ENCODE measurements at regions of chr19 and their contacts with region 1.

Region 1: DNA sequence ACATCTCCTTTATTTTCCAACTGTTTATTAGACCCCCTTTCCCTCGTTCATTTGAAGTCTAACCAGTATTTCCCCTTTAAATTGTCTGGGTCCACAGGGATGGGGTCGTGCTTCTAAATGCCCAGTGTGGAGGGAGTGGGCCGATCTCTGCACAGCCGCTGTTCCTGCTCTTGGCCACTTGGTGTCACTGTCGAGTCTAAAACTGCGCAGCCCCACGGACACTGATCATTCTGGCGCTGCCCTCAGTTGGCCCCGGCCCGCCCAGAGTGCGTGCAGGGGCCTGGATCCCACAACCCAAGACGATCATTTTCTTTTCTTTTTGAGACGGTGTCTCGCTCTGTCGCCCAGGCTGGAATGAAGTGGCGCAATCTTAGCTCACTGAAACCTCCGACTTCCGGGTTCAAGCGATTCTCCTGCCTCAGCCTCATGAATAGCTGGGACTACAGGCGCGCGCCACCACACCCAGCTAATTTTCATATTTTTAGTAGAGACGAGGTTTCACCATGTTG is 12.0 kb downstream of the WDR88 start:
- DNase-seq: peak; percentile 75 to 86 (median 83)
- ATAC-seq: peak; percentile 97
- H3K4me3 ChIP-seq: no peak overlapping the region
- H3K27ac ChIP-seq: no peak overlapping the region
- H3K4me1 ChIP-seq: peaks cover 0 to 3% of the 10 kb centered on the region in 2 experiments; a peak in 2 of 5 replicates
- H3K27me3 ChIP-seq: peaks cover 17 to 48% of the 10 kb centered on the region in 2 experiments; a peak in 4 of 5 replicates
- CTCF ChIP-seq: peak; percentile 85 to 92 (median 90)
- EP300 ChIP-seq: no peak
- POLR2A ChIP-seq: no peak
- RAD21 ChIP-seq: peak; percentile 78 to 88

Region 2: GRCh38 chr19:33176670-33177416 is 32.9 kb after region 1 on chr19:
- CTCF ChIA-PET with region 1: interaction called, 3 read pairs
- POLR2A ChIA-PET with region 1: interaction called, 3 read pairs
- in situ Hi-C with region 1: loop called (anchors 5 kb)
- intact Hi-C with region 1: no loop called
- DNase-seq: peak; percentile 98 to 99 (median 99)
- ATAC-seq: peak; percentile 95
- H3K4me3 ChIP-seq: peak overlapping the region; percentile 72
- H3K27ac ChIP-seq: peak overlapping the region; percentile 85
- H3K4me1 ChIP-seq: peaks cover 12 to 30% of the 10 kb centered on the region in 2 experiments; a peak in 4 of 5 replicates
- H3K27me3 ChIP-seq: peaks cover 6 to 7% of the 10 kb centered on the region in 2 experiments; a peak in 3 of 5 replicates
- CTCF ChIP-seq: peak in 2 of 3 experiments; percentile 36 to 46; a peak in 3 of 6 replicates
- EP300 ChIP-seq: peak; percentile 85
- POLR2A ChIP-seq: peak; percentile 96
- RAD21 ChIP-seq: no peak

Region 3: GRCh38 chr19:33186431-33187182 is 42.7 kb after region 1 on chr19:
- CTCF ChIA-PET with region 1: interaction called, 5 read pairs
- POLR2A ChIA-PET with region 1: no interaction called
- in situ Hi-C with region 1: loop called (anchors 5 kb)
- intact Hi-C with region 1: loop called (anchors 1 kb)
- DNase-seq: no peak
- ATAC-seq: no peak
- H3K4me3 ChIP-seq: no peak overlapping the region
- H3K27ac ChIP-seq: no peak overlapping the region
- H3K4me1 ChIP-seq: no peaks in the 10 kb centered on the region; a peak in 1 of 5 replicates
- H3K27me3 ChIP-seq: peaks cover 6 to 20% of the 10 kb centered on the region in 2 experiments; a peak in 4 of 5 replicates
- CTCF ChIP-seq: no peak
- EP300 ChIP-seq: no peak
- POLR2A ChIP-seq: no peak
- RAD21 ChIP-seq: no peak

Region 4: GRCh38 chr19:33208904-33209849 is 65.2 kb after region 1 on chr19:
- CTCF ChIA-PET with region 1: no interaction called
- POLR2A ChIA-PET with region 1: no interaction called
- in situ Hi-C with region 1: no loop called
- intact Hi-C with region 1: no loop called
- DNase-seq: peak in 1 of 4 experiments; percentile 18
- ATAC-seq: peak; percentile 46; the same call in 2 of the 3 replicates
- H3K4me3 ChIP-seq: no peak overlapping the region
- H3K27ac ChIP-seq: no peak overlapping the region
- H3K4me1 ChIP-seq: peaks cover 0 to 37% of the 10 kb centered on the region in 2 experiments; a peak in 2 of 5 replicates
- H3K27me3 ChIP-seq: peaks cover 14 to 87% of the 10 kb centered on the region in 2 experiments; a peak in 4 of 5 replicates
- CTCF ChIP-seq: peak; percentile 25 to 29 (median 29); a peak in 3 of 6 replicates
- EP300 ChIP-seq: no peak
- POLR2A ChIP-seq: no peak
- RAD21 ChIP-seq: peak in 1 of 2 experiments; percentile 33; a peak in 2 of 4 replicates

Region 5: DNA sequence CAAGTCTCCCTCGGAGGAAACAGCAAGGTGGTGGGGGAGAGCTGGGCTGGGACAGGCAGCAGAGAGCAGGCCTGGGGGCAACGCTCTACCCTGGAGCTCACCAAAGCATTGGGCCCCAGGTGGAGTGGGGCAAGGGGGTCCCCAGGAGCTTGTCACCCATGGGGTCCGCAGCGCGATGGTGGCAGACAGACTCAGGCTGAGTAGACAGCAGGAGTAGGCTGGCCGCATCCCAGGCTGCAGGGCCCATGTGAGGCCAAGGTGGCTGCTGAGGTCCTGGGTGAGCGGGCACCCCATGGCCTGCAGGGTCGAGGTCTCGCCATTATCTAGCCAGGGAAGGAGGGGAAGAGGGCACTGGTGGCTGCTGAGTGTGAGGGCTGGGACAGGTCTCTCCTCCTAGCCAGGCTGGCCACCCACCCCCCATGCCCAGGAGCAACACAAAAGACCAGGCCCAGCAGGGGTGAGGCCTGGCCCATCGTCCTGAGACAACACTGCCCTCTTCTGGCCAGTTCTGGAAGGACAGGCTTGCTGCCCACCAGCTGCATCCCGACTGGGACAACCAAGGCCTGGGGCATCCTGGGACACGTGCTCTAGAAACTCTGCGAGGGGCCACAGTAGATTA is 262.7 kb after region 1 on chr19:
- CTCF ChIA-PET with region 1: interaction called, 3 read pairs
- POLR2A ChIA-PET with region 1: no interaction called
- in situ Hi-C with region 1: loop called (anchors 10 kb)
- intact Hi-C with region 1: loop called (anchors 5 kb)
- DNase-seq: peak; percentile 75 to 88 (median 85)
- ATAC-seq: peak; percentile 88
- H3K4me3 ChIP-seq: no peak overlapping the region
- H3K27ac ChIP-seq: no peak overlapping the region
- H3K4me1 ChIP-seq: peaks cover 0 to 32% of the 10 kb centered on the region in 2 experiments; a peak in 2 of 5 replicates
- H3K27me3 ChIP-seq: peaks cover 0 to 16% of the 10 kb centered on the region in 2 experiments; a peak in 1 of 5 replicates
- CTCF ChIP-seq: peak; percentile 87 to 88 (median 87)
- EP300 ChIP-seq: no peak
- POLR2A ChIP-seq: no peak
- RAD21 ChIP-seq: peak; percentile 84 to 93

Measured in K562 (cell line).